B cell (primary cell): ENCODE measurements at regions of chr5 and their contacts with region 1.

Region 1: GRCh38 chr5:20972419-20972925 is 984.5 kb upstream of the CDH18 start:
- DNase-seq: peak; percentile 37
- ATAC-seq: peak; percentile 67
- H3K4me3 ChIP-seq: peak overlapping the region in 4 of 5 experiments; percentile 23 to 57 (median 46)
- H3K4me3 Mint-ChIP-seq: peak overlapping the region; percentile 85
- H3K27ac ChIP-seq: no peak overlapping the region
- H3K27ac Mint-ChIP-seq: no peak overlapping the region
- H3K4me1 ChIP-seq: no peaks in the 10 kb centered on the region
- H3K4me1 Mint-ChIP-seq: peaks cover 9% of the 10 kb centered on the region
- H3K27me3 ChIP-seq: no peaks in the 10 kb centered on the region
- H3K27me3 Mint-ChIP-seq: no peaks in the 10 kb centered on the region
- CTCF ChIP-seq: peak; percentile 14

Region 2: DNA sequence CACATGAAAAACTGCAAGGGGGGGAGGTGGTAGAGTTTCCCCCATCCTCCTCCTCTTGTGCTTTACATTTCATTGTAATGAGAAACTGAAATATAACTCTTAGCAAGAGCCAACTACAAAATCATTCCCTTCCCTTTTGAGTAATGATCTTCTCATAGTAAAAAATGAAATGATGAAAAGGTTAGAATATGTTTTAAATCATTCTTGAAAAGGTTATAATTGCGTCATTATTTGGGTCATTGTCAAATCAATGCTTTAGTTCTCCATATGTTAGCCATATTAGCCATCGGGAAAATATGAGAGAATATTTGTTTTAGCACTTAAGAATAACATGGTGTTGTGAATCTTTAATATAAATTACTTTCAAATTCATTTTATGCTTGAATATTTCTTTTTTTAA is 200.6 kb after region 1 on chr5:
- CTCF ChIA-PET with region 1: no interaction called
- POLR2A ChIA-PET with region 1: no interaction called
- intact Hi-C with region 1: loop called (anchors 1 kb)
- DNase-seq: no peak
- ATAC-seq: no peak
- H3K4me3 ChIP-seq: no peak overlapping the region
- H3K4me3 Mint-ChIP-seq: no peak overlapping the region
- H3K27ac ChIP-seq: no peak overlapping the region
- H3K27ac Mint-ChIP-seq: no peak overlapping the region
- H3K4me1 ChIP-seq: no peaks in the 10 kb centered on the region
- H3K4me1 Mint-ChIP-seq: no peaks in the 10 kb centered on the region
- H3K27me3 ChIP-seq: no peaks in the 10 kb centered on the region
- H3K27me3 Mint-ChIP-seq: no peaks in the 10 kb centered on the region
- CTCF ChIP-seq: no peak